Ovary (tissue), 10 donors: ENCODE measurements at regions of chr7 and their contacts with region 1.

Region 1: GRCh38 chr7:25894902-25895791 is 256.9 kb upstream of the NFE2L3 start:
- DNase-seq: peak; percentile 65 to 84 (median 78)
- H3K4me3 ChIP-seq: peak overlapping the region; percentile 3
- H3K27ac ChIP-seq: peak overlapping the region in 1 of 2 donors; percentile 68
- H3K4me1 ChIP-seq: peaks cover 6% of the 10 kb centered on the region
- H3K27me3 ChIP-seq: no peaks in the 10 kb centered on the region
- CTCF ChIP-seq: peak; percentile 52 to 70 (median 59)
- EP300 ChIP-seq: no peak
- POLR2A ChIP-seq: no peak

Region 2: GRCh38 chr7:26200444-26201246 is 305.5 kb after region 1 on chr7 and contains the start of gene HNRNPA2B1:
- intact Hi-C with region 1: loop called in 2 of 4 experiments (anchors 5 to 10 kb)
- DNase-seq: peak; percentile 96 to 99 (median 98)
- H3K4me3 ChIP-seq: peak within 1 kb of the TSS; percentile 97
- H3K27ac ChIP-seq: peak within 1 kb of the TSS; percentile 98 to 100
- H3K4me1 ChIP-seq: peaks cover 4% of the 10 kb centered on the region
- H3K27me3 ChIP-seq: no peaks in the 10 kb centered on the region
- CTCF ChIP-seq: peak in 1 of 3 donors; percentile 4
- EP300 ChIP-seq: peak; percentile 27
- POLR2A ChIP-seq: peak; percentile 100
- total RNA-seq, gene HNRNPA2B1: 236 to 451 (median 368) TPM

Region 3: DNA sequence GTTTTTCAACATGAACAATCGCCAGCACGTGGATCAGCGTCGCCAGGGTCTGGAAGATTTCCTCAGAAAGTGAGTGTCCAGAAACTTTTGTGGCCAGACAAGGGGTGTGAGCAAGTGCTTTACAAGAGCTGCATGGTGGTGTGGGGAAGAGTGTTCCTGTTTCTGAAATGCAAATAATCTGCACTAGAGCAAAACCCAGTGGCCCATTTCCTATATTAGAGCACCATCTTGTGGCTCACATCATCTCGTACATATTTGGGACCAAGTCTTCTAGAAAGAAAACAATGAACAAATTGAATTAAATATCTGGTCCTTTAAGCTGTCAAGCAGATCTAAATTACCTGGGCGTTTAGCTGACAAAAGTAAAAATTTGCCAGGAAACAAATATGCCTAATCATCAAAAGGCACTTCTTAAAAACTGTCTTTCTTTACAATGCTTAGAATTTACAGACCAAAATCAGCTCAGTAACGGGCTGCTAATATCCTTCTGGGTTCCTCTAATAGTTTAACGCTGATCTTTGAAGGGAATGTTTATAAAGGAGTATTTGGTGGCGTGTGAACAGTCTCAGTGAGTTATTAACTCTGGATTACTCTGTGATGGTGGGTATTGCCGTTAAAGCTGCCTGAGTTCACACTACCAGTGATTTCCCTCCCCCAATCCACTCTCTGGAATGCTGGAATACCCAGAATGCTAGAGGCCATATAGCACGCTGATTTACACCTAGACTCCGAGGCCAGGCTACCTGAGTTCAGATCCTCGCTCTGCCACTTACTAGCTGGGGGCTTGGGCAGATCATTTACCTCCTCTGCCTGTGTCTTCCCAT is 470.1 kb after region 1 on chr7:
- intact Hi-C with region 1: loop called (anchors 2 to 5 kb)
- DNase-seq: peak in 3 of 5 donors; percentile 19 to 64 (median 34)
- H3K4me3 ChIP-seq: no peak overlapping the region
- H3K27ac ChIP-seq: no peak overlapping the region
- H3K4me1 ChIP-seq: no peaks in the 10 kb centered on the region
- H3K27me3 ChIP-seq: no peaks in the 10 kb centered on the region
- CTCF ChIP-seq: peak; percentile 35 to 81 (median 78)
- EP300 ChIP-seq: no peak
- POLR2A ChIP-seq: no peak

Region 4: DNA sequence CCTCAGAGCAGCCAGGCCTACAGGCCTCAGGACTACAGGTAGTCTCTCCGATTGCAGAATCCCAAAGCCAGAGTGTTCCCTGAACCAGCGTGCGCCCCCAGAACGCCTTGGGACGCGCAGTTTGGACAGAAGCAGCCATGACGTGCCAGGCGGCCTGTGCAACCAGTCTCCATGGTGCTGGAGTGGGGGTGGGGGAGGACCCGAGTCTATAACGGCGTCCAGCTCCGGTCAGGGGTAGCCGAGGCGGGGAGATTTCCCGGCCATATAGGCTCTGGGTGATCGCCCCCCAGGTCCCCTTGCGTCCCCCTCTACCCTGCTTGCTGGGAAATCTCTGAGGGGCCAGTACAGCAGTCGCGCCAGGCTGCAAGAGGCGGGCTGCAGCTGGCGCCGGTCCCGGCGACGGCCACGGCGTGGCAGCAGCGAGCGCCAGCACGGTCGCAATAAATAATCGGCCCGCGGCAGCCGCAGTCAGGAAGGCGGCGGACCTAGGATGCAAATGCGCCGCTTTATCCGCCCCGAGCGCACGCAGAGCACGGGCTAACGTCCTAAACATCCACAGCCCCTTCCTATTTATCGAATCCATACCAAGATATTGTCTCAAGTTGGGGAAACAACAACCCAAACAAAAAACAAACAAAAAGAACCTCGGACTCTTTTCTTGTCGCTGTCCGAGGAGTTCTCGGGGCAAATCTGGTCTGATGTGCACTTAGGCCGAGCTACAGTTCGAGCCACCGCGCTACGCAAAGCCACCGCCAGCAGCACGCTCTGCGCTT is 1255.6 kb after region 1 on chr7:
- intact Hi-C with region 1: loop called in 1 of 4 experiments (anchors 10 kb)
- DNase-seq: peak; percentile 58 to 81 (median 64)
- H3K4me3 ChIP-seq: peak overlapping the region; percentile 74
- H3K27ac ChIP-seq: no peak overlapping the region
- H3K4me1 ChIP-seq: peaks cover 4% of the 10 kb centered on the region
- H3K27me3 ChIP-seq: peaks cover 3% of the 10 kb centered on the region
- CTCF ChIP-seq: peak; percentile 50 to 84 (median 61)
- EP300 ChIP-seq: no peak
- POLR2A ChIP-seq: no peak